Activated CD4-positive, alpha-beta memory T cell treated with anti-CD3 and anti-CD28 coated beads for 36 hours (primary cell): ENCODE measurements at regions of chr5 and their contacts with region 1.

Region 1: DNA sequence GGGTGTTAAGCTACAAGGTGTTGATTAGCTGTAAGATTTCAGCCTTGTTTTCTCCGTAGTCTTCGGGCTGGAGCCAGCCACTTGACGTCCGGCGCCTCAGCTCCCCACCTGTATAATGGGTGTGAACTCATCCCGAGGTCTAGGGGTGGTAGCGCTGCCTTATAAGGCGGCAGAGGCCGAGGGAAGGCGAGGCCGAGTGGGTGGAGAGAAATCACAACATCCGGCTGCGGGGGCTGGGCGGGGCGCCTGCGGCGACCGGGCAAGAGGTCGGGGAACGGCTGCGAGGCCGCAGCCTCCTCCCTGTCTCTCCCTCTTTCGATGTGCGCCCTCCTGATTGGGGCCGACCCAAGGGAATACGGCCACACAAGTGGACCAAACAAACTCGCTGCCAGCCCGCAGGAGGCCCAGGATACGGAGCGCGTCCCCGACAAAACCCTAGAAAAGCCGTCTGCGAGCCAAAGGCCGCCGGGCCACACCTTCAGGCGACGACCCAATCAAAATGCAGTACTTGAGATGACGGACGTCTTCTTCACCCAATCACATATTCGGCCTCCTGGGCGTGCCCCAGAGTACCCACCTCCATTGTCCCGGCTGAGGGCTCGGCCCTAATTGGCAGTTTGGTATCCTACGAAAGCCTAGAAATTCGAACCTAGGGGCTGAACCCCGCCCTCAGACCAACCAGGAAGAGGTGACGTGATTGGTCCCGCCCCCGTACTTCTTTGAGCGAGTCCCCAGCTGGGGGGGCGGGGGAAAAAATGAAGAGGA is 493 bp upstream of the GRK6 start:
- DNase-seq: peak; percentile 100
- H3K4me3 Mint-ChIP-seq: peak overlapping the region; percentile 87
- H3K27ac Mint-ChIP-seq: peak overlapping the region; percentile 94
- H3K4me1 Mint-ChIP-seq: peaks cover 35% of the 10 kb centered on the region
- H3K27me3 Mint-ChIP-seq: no peaks in the 10 kb centered on the region

Region 2: GRCh38 chr5:177336112-177336511 is 89.9 kb before region 1 on chr5:
- CTCF ChIA-PET with region 1: no interaction called
- POLR2A ChIA-PET with region 1: no interaction called
- intact Hi-C with region 1: no loop called
- DNase-seq: peak; percentile 50
- H3K4me3 Mint-ChIP-seq: no peak overlapping the region
- H3K27ac Mint-ChIP-seq: no peak overlapping the region
- H3K4me1 Mint-ChIP-seq: peaks cover 12% of the 10 kb centered on the region
- H3K27me3 Mint-ChIP-seq: no peaks in the 10 kb centered on the region

Region 3: GRCh38 chr5:177412603-177413233 is 13.3 kb before region 1 on chr5:
- CTCF ChIA-PET with region 1: interaction called, 5 read pairs
- POLR2A ChIA-PET with region 1: interaction called, 12 read pairs
- intact Hi-C with region 1: loop called (anchors 2 kb)
- DNase-seq: peak; percentile 64
- H3K4me3 Mint-ChIP-seq: peak overlapping the region; percentile 55
- H3K27ac Mint-ChIP-seq: peak overlapping the region; percentile 82
- H3K4me1 Mint-ChIP-seq: peaks cover 46% of the 10 kb centered on the region
- H3K27me3 Mint-ChIP-seq: no peaks in the 10 kb centered on the region

Region 4: GRCh38 chr5:177446200-177447065 is 20.4 kb after region 1 on chr5 and contains the start of gene PRR7:
- CTCF ChIA-PET with region 1: interaction called, 126 read pairs
- POLR2A ChIA-PET with region 1: interaction called, 319 read pairs
- intact Hi-C with region 1: loop called (anchors 1 kb)
- DNase-seq: peak; percentile 77
- H3K4me3 Mint-ChIP-seq: peak within 1 kb of the TSS; percentile 67
- H3K27ac Mint-ChIP-seq: peak within 1 kb of the TSS; percentile 81
- H3K4me1 Mint-ChIP-seq: peaks cover 48% of the 10 kb centered on the region
- H3K27me3 Mint-ChIP-seq: no peaks in the 10 kb centered on the region
- total RNA-seq, gene PRR7: 13.3 to 13.6 TPM

Region 5: GRCh38 chr5:177473461-177474001 is 47.5 kb after region 1 on chr5 and contains the start of gene DBN1:
- CTCF ChIA-PET with region 1: no interaction called
- POLR2A ChIA-PET with region 1: no interaction called
- intact Hi-C with region 1: no loop called
- DNase-seq: peak; percentile 25
- H3K4me3 Mint-ChIP-seq: peak within 1 kb of the TSS; percentile 64
- H3K27ac Mint-ChIP-seq: no peak within 1 kb of the TSS
- H3K4me1 Mint-ChIP-seq: peaks cover 22% of the 10 kb centered on the region
- H3K27me3 Mint-ChIP-seq: peaks cover 5% of the 10 kb centered on the region
- total RNA-seq, gene DBN1: 12.1 to 15.9 TPM